ENCODE measurements at regions of chr2 and their contacts with region 1.

Region 1: GRCh38 chr2:5915881-5916310 is 223.7 kb downstream of the SOX11 start:
- DNase-seq: no peak
- H3K4me3 ChIP-seq: no peak overlapping the region
- CTCF ChIP-seq: peak; percentile 56

Region 2: DNA sequence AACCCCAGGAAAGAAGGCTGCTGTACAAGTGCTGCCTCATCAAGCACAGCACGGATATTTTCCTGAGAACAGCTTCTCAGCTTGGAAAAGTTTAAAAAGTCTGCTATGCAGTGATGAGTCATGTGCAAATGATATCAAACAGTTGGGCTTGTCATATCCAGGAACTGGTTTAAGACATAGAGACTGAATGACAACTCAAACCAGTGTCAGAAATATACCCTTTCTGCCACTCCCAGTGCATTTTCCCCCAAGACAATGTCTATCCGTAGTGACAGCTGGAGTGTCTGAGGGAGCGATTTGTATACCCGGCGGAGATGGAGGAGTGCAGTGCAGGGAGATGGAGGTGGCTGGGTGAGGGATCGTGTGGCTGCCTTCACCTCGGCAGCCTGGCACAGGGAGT is 195.5 kb before region 1 on chr2:
- in situ Hi-C with region 1: loop called (anchors 25 kb)
- DNase-seq: no peak
- H3K4me3 ChIP-seq: no peak overlapping the region
- CTCF ChIP-seq: no peak

Region 3: GRCh38 chr2:6626401-6627012 is 710.6 kb after region 1 on chr2:
- in situ Hi-C with region 1: no loop called
- DNase-seq: peak; percentile 1
- H3K4me3 ChIP-seq: no peak overlapping the region
- CTCF ChIP-seq: no peak

Measured in astrocyte of the cerebellum (primary cell).